Activated CD4-positive, alpha-beta memory T cell treated with anti-CD3 and anti-CD28 coated beads, Interleukin-2, amount 10 ng/mL, durations not matched to agents 7 days and 5 days (primary cell): ENCODE measurements at regions of chr3 and their contacts with region 1.

Region 1: DNA sequence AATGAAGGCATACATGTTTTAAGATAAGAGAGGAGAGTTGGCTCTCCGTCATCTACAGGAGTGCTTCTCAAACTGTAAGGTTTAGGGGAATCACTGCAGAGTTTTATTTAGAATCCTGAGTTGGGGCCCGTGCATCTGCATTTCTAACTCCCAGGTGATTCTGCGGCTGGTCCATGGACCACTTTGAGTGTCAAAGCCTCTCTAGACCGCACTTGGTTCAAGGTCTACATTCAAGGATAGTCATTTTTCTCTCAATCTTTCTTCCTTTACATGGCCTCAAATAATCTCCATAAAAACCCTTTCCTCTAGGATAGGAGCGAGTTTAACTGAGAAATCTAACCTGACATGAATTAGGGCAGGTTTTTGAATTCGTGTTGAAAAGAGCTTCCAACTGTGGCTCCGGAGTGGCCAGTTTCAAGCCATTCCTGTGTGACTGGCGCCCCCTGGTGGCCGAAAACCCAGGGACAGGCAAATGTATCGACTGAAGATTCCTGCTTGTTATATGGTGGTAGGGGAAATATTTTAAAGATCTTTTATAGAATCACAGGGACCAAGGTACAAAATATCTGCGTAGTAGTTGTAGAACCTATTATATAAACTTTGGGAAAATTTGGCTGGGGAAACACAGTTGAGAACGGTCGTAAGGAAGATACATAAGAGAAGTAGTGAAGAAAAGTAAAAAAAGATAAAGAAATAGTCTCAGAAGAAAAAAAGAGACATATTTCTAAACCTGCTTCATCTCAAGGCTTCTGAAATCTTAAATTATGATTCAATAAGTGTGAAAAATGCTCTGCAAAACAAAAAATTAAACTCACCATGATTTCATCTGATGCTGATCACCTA is 11.9 kb downstream of the GABRR3 start:
- DNase-seq: peak; percentile 92
- H3K4me3 Mint-ChIP-seq: no peak overlapping the region
- H3K27ac Mint-ChIP-seq: no peak overlapping the region
- H3K4me1 Mint-ChIP-seq: peaks cover 16% of the 10 kb centered on the region
- H3K27me3 Mint-ChIP-seq: no peaks in the 10 kb centered on the region

Region 2: DNA sequence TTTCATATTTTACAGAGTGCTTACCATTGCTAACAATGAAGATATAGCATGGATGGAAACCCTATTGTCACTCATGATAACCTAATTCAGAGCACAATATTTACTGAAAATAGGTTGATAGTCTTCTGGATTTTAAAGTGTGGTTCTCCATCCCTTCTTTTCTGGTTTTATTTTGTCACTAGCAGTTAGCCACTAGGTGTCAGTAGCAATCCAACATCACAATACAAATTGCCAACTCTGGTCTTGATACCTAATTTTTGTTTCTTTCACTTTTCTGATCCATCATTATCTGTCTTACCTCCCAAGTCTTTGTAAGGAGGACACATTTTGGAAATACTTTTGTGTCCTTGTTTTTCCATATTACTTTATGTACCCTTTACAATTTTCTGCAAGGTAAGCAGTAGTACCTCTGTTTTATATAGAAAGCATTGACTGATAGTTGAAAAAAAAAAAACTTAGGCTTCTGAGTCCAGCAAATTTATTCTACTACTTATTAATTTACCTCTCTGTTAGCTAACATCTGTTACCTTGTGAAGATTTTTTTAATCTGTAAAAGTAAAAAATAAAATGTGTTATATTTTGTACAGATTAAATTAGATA is 229.7 kb before region 1 on chr3:
- CTCF ChIA-PET with region 1: interaction called, 68 read pairs
- POLR2A ChIA-PET with region 1: interaction called, 7 read pairs
- DNase-seq: no peak
- H3K4me3 Mint-ChIP-seq: no peak overlapping the region
- H3K27ac Mint-ChIP-seq: no peak overlapping the region
- H3K4me1 Mint-ChIP-seq: peaks cover 3% of the 10 kb centered on the region
- H3K27me3 Mint-ChIP-seq: no peaks in the 10 kb centered on the region

Region 3: GRCh38 chr3:97940034-97940433 is 83.2 kb before region 1 on chr3:
- CTCF ChIA-PET with region 1: interaction called, 14 read pairs
- POLR2A ChIA-PET with region 1: interaction called, 4 read pairs
- DNase-seq: no peak
- H3K4me3 Mint-ChIP-seq: no peak overlapping the region
- H3K27ac Mint-ChIP-seq: no peak overlapping the region
- H3K4me1 Mint-ChIP-seq: peaks cover 22% of the 10 kb centered on the region
- H3K27me3 Mint-ChIP-seq: no peaks in the 10 kb centered on the region

Region 4: GRCh38 chr3:97971677-97972567 is 51.3 kb before region 1 on chr3 and contains the start of gene RIOX2:
- CTCF ChIA-PET with region 1: interaction called, 47 read pairs
- POLR2A ChIA-PET with region 1: interaction called, 16 read pairs
- DNase-seq: peak; percentile 86
- H3K4me3 Mint-ChIP-seq: peak within 1 kb of the TSS; percentile 86
- H3K27ac Mint-ChIP-seq: peak within 1 kb of the TSS; percentile 93
- H3K4me1 Mint-ChIP-seq: peaks cover 77% of the 10 kb centered on the region
- H3K27me3 Mint-ChIP-seq: no peaks in the 10 kb centered on the region
- total RNA-seq, gene RIOX2: 46.5 to 46.7 TPM

Region 5: DNA sequence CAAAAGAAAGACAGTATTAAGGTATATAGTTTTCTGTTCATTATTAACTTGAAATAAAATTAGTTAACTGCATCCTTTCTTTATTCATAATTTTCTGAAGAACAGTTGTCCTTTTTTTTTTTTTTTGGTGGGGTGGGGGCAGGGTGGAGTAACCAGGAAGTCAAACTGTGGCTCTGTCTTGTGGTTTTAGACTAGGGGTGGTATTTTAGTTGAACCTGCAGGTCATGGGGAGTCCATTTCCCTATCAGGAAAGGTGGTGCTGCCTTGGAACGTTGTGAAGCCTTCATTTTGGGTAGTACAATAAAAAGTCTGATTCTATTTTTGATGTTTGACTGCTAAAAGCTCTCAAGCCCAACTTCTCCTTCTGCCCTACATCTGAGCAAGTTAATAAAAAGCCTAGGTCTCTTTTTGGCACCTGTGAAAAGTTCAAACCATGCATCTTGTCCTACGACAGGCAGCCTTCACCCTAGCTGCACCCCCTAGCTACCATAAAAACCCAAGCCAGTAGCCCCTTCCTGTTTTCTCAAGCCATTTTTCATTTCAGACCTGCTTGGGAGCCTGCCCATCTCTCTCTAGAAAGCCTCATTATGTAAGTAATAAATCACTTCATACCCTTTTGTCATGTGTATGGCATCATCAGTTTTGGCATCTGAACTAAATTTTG is 19.8 kb before region 1 on chr3:
- CTCF ChIA-PET with region 1: interaction called, 10 read pairs
- POLR2A ChIA-PET with region 1: interaction called, 6 read pairs
- DNase-seq: no peak
- H3K4me3 Mint-ChIP-seq: no peak overlapping the region
- H3K27ac Mint-ChIP-seq: peak overlapping the region; percentile 63
- H3K4me1 Mint-ChIP-seq: peaks cover 40% of the 10 kb centered on the region
- H3K27me3 Mint-ChIP-seq: peaks cover 4% of the 10 kb centered on the region